Activated CD4-positive, alpha-beta T cell treated with anti-CD3 and anti-CD28 coated beads for 36 hours (primary cell): ENCODE measurements at regions of chr12 and their contacts with region 1.

Region 1: GRCh38 chr12:125175576-125175975 is 110.3 kb downstream of the AACS start:
- DNase-seq: no peak
- ATAC-seq: no peak
- H3K4me3 Mint-ChIP-seq: no peak overlapping the region
- H3K27ac Mint-ChIP-seq: no peak overlapping the region
- H3K4me1 Mint-ChIP-seq: no peaks in the 10 kb centered on the region
- H3K27me3 Mint-ChIP-seq: peaks cover 18% of the 10 kb centered on the region

Region 2: GRCh38 chr12:124543052-124543589 is 632.5 kb before region 1 on chr12:
- CTCF ChIA-PET with region 1: no interaction called
- POLR2A ChIA-PET with region 1: no interaction called
- intact Hi-C with region 1: no loop called
- DNase-seq: peak; percentile 31
- ATAC-seq: no peak
- H3K4me3 Mint-ChIP-seq: no peak overlapping the region
- H3K27ac Mint-ChIP-seq: no peak overlapping the region
- H3K4me1 Mint-ChIP-seq: peaks cover 60% of the 10 kb centered on the region
- H3K27me3 Mint-ChIP-seq: no peaks in the 10 kb centered on the region

Region 3: GRCh38 chr12:125114365-125115141 is 61.0 kb before region 1 on chr12:
- CTCF ChIA-PET with region 1: no interaction called
- POLR2A ChIA-PET with region 1: no interaction called
- intact Hi-C with region 1: no loop called
- DNase-seq: peak; percentile 55
- ATAC-seq: peak; percentile 61
- H3K4me3 Mint-ChIP-seq: no peak overlapping the region
- H3K27ac Mint-ChIP-seq: no peak overlapping the region
- H3K4me1 Mint-ChIP-seq: no peaks in the 10 kb centered on the region
- H3K27me3 Mint-ChIP-seq: no peaks in the 10 kb centered on the region

Region 4: DNA sequence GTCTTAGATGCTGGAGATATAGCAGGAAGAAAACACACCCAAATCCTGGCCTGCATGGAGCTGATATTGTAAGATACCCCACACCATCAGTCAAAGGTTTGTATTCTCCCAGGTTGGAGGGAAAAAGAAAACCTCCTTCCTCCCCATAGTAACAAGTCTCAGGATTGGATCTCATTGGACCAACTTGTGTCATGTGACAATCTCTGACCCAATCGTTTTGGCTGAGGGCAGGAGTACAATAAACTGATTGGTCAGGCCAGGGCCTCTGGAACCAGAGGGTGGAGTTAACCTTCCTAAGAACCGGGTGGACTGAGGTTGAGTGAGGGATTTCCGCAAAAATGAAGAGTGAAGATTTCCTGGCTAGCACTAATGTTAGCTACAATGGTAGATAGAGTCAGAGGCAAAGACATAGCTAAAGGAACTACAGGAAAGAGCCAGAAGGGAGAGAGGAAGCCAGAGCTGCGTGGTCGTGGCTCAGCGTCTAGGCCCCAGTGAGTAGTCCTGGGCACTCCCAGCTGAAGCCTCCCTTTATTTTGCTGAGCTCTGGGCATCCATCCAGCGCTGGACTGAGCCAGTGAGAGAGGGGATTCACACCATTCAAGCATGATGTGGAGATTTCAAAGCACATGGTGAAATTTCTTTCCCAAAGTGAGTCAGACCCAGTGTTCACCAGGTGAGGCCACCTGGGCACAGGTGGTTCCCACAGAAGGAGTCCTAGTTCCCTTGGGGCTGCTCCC is 109.5 kb after region 1 on chr12:
- CTCF ChIA-PET with region 1: no interaction called
- POLR2A ChIA-PET with region 1: interaction called, 12 read pairs
- intact Hi-C with region 1: no loop called
- DNase-seq: no peak
- ATAC-seq: no peak
- H3K4me3 Mint-ChIP-seq: no peak overlapping the region
- H3K27ac Mint-ChIP-seq: no peak overlapping the region
- H3K4me1 Mint-ChIP-seq: no peaks in the 10 kb centered on the region
- H3K27me3 Mint-ChIP-seq: peaks cover 21% of the 10 kb centered on the region